Breast epithelium (tissue), 4 donors: ENCODE measurements at regions of chr1 and their contacts with region 1.

Region 1: DNA sequence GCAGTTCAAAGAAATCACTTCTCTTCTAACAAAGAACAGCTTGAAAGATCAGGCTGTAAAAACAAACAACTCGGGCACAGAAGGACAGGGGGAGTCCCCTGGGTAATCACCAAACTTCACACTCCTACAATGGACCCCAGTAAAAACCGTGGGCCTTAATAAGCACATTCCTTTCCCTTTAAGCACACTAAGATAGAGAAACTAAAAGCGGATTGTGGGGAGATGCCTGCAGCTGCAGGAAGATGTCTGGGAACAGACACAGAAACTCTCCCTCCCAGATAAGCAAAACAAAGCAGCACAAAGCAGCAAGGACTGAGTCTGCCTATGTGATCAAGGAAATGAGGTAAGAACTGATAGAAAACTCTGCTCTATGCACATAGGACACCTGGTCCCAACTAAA is 37.6 kb upstream of the CTBS start:
- DNase-seq: no peak
- H3K4me3 ChIP-seq: no peak overlapping the region
- H3K27ac ChIP-seq: no peak overlapping the region
- H3K4me1 ChIP-seq: no peaks in the 10 kb centered on the region
- H3K27me3 ChIP-seq: no peaks in the 10 kb centered on the region
- CTCF ChIP-seq: no peak
- POLR2A ChIP-seq: no peak

Region 2: DNA sequence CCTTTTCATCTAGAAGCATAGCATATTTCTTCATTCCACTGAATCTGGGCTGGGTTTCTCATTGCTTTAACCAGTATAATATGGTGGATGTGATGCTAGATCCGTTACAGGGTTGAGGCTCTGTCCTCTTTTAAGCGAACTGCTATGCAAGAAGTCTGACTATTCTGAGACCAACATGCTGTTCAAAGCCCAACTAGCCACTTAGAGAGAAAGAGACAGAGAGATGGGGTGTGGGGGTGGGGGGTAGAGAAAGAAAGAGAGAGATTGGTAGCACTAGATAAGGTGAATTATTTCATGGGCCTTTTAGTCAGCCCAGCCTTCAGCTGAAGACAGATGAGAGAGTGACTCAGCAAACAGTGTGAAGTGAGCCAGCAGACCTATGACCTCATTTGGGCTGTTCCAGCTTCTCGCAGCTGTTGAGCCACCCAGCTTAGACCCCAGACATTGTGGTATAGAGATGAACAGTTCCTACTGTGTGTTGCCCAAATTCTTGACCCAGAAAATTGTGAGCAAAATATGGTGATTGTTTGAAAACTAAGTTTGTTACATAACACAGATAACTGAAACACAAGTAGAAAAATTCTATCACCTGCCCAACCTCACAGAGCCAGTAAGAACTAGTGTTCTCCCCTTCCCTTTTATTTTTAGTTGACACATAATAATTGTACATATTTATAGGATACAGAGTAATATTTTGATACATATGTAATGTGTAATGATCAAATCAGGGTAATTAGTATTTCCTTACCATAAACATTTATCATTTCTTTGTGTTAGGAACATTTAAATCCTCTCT is 508.4 kb before region 1 on chr1:
- intact Hi-C with region 1: no loop called
- DNase-seq: no peak
- H3K4me3 ChIP-seq: no peak overlapping the region
- H3K27ac ChIP-seq: no peak overlapping the region
- H3K4me1 ChIP-seq: no peaks in the 10 kb centered on the region
- H3K27me3 ChIP-seq: no peaks in the 10 kb centered on the region
- CTCF ChIP-seq: no peak
- POLR2A ChIP-seq: no peak

Region 3: GRCh38 chr1:84597011-84597410 is 14.8 kb before region 1 on chr1:
- intact Hi-C with region 1: loop called (anchors 1 kb)
- DNase-seq: no peak
- H3K4me3 ChIP-seq: no peak overlapping the region
- H3K27ac ChIP-seq: no peak overlapping the region
- H3K4me1 ChIP-seq: no peaks in the 10 kb centered on the region
- H3K27me3 ChIP-seq: no peaks in the 10 kb centered on the region
- CTCF ChIP-seq: no peak
- POLR2A ChIP-seq: no peak